Activated CD4-positive, alpha-beta T cell treated with anti-CD3 and anti-CD28 coated beads, Interleukin-2, amount 10 ng/mL, durations not matched to agents 24 days and 14 days (primary cell): ENCODE measurements at regions of chr2 and their contacts with region 1.

Region 1: GRCh38 chr2:179129574-179130238 is 79.8 kb upstream of the CCDC141 start:
- DNase-seq: peak; percentile 72
- H3K4me3 Mint-ChIP-seq: no peak overlapping the region
- H3K27ac Mint-ChIP-seq: no peak overlapping the region
- H3K4me1 Mint-ChIP-seq: peaks cover 1% of the 10 kb centered on the region
- H3K27me3 Mint-ChIP-seq: no peaks in the 10 kb centered on the region

Region 2: DNA sequence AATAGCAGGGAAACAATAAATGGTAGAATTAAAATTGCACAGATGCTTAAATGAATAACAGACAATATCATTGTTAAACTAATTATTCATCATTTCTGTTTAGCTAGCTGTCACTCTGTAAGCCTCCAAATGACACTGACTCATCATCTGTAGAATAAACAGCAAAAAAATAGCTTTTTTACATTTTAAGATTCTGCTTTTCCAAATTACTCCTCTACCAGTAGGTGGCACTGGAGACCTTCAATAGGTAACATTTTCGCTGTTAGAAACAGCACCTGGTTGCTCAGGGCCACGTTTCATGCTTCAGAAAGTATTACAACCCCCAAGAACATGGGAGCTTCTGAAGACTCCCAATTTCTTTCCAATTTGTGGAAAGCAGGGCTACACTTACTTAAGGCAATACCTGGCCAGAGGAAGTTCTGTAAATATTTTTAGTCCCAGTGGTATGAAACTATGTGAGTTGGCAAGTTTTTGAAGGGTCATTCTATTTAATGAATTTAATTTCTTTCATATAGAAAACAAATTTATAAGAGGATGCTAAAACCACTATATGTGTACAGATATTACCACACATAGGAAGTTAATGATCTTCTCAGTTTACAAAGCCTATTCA is 367.8 kb before region 1 on chr2:
- intact Hi-C with region 1: loop called (anchors 5 kb)
- DNase-seq: peak; percentile 82
- H3K4me3 Mint-ChIP-seq: no peak overlapping the region
- H3K27ac Mint-ChIP-seq: no peak overlapping the region
- H3K4me1 Mint-ChIP-seq: no peaks in the 10 kb centered on the region
- H3K27me3 Mint-ChIP-seq: no peaks in the 10 kb centered on the region

Region 3: GRCh38 chr2:178796079-178796677 is 333.5 kb before region 1 on chr2:
- intact Hi-C with region 1: loop called (anchors 10 kb)
- DNase-seq: no peak
- H3K4me3 Mint-ChIP-seq: no peak overlapping the region
- H3K27ac Mint-ChIP-seq: no peak overlapping the region
- H3K4me1 Mint-ChIP-seq: no peaks in the 10 kb centered on the region
- H3K27me3 Mint-ChIP-seq: no peaks in the 10 kb centered on the region

Region 4: GRCh38 chr2:178891265-178891958 is 238.3 kb before region 1 on chr2:
- intact Hi-C with region 1: loop called (anchors 1 kb)
- DNase-seq: peak; percentile 90
- H3K4me3 Mint-ChIP-seq: no peak overlapping the region
- H3K27ac Mint-ChIP-seq: no peak overlapping the region
- H3K4me1 Mint-ChIP-seq: peaks cover 4% of the 10 kb centered on the region
- H3K27me3 Mint-ChIP-seq: no peaks in the 10 kb centered on the region